Naive thymus-derived CD4-positive, alpha-beta T cell (primary cell): ENCODE measurements at regions of chr9 and their contacts with region 1.

Region 1: GRCh38 chr9:136363606-136364370 is at the start of gene DNLZ:
- DNase-seq: peak; percentile 71 to 93 (median 90)
- ATAC-seq: peak; percentile 88
- H3K4me3 ChIP-seq: peak within 1 kb of the TSS; percentile 70
- H3K4me3 Mint-ChIP-seq: peak within 1 kb of the TSS; percentile 65 to 88 (median 84)
- H3K27ac ChIP-seq: peak within 1 kb of the TSS; percentile 75
- H3K27ac Mint-ChIP-seq: peak within 1 kb of the TSS; percentile 62 to 91 (median 75)
- H3K4me1 ChIP-seq: peaks cover 0 to 5% of the 10 kb centered on the region in 2 donors
- H3K4me1 Mint-ChIP-seq: peaks cover 0 to 6% (median 0%) of the 10 kb centered on the region in 7 donors
- H3K27me3 ChIP-seq: no peaks in the 10 kb centered on the region
- H3K27me3 Mint-ChIP-seq: no peaks in the 10 kb centered on the region
- total RNA-seq, gene DNLZ: 17.2 to 27.5 (median 24.8) TPM

Region 2: GRCh38 chr9:135907431-135908092 is 456.2 kb before region 1 on chr9 and contains the start of gene CAMSAP1:
- CTCF ChIA-PET with region 1: no interaction called
- POLR2A ChIA-PET with region 1: interaction called, 3 read pairs
- intact Hi-C with region 1: loop called (anchors 1 kb)
- DNase-seq: peak; percentile 89 to 97 (median 93)
- ATAC-seq: peak; percentile 91
- H3K4me3 ChIP-seq: peak within 1 kb of the TSS; percentile 69
- H3K4me3 Mint-ChIP-seq: peak within 1 kb of the TSS; percentile 85 to 94 (median 90)
- H3K27ac ChIP-seq: peak within 1 kb of the TSS; percentile 89
- H3K27ac Mint-ChIP-seq: peak within 1 kb of the TSS; percentile 68 to 92 (median 83)
- H3K4me1 ChIP-seq: peaks cover 21% of the 10 kb centered on the region in 2 donors
- H3K4me1 Mint-ChIP-seq: peaks cover 33 to 74% (median 63%) of the 10 kb centered on the region in 7 donors
- H3K27me3 ChIP-seq: no peaks in the 10 kb centered on the region
- H3K27me3 Mint-ChIP-seq: no peaks in the 10 kb centered on the region
- total RNA-seq, gene CAMSAP1: 16.4 to 34.3 (median 23.6) TPM

Region 3: DNA sequence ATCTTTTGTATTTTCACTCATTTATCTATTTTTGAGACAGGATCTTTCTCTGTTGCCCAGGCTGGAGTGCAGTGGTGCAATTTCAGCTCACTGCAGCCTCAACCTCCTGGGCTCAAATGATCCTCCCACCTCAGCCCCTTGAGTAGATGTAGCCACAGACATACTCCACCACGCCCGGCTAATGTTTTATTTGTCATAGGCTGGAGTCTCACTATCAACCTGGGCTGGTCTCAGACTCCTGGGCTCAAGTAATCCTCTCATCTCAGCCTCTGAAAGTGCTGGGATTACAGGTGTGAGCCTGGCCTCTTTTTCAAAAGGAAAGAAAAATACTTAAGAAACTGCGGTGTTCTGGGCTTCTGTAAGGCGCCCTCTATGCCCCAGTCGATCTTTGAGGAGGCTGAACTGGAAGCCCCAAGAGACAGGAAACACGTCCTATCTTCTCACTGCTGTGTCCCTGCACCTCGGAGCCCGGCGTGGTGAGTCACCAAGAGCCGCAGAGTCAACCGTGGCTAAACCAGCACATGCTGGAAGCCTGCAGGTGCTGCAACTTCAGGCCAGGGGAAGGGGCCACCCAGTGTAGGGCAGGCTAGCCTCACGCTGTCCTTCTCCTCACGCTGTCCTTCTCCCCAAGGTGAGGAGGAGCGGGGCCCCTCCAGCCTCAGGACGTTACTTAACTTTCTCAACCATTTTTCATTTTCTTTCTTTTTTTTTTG is 143.6 kb before region 1 on chr9:
- CTCF ChIA-PET with region 1: no interaction called
- POLR2A ChIA-PET with region 1: no interaction called
- intact Hi-C with region 1: no loop called
- DNase-seq: no peak
- ATAC-seq: no peak
- H3K4me3 ChIP-seq: no peak overlapping the region
- H3K4me3 Mint-ChIP-seq: no peak overlapping the region
- H3K27ac ChIP-seq: no peak overlapping the region
- H3K27ac Mint-ChIP-seq: peak overlapping the region in 1 of 9 donors; percentile 18
- H3K4me1 ChIP-seq: no peaks in the 10 kb centered on the region
- H3K4me1 Mint-ChIP-seq: peaks cover 0 to 3% (median 2%) of the 10 kb centered on the region in 7 donors
- H3K27me3 ChIP-seq: no peaks in the 10 kb centered on the region
- H3K27me3 Mint-ChIP-seq: no peaks in the 10 kb centered on the region

Region 4: DNA sequence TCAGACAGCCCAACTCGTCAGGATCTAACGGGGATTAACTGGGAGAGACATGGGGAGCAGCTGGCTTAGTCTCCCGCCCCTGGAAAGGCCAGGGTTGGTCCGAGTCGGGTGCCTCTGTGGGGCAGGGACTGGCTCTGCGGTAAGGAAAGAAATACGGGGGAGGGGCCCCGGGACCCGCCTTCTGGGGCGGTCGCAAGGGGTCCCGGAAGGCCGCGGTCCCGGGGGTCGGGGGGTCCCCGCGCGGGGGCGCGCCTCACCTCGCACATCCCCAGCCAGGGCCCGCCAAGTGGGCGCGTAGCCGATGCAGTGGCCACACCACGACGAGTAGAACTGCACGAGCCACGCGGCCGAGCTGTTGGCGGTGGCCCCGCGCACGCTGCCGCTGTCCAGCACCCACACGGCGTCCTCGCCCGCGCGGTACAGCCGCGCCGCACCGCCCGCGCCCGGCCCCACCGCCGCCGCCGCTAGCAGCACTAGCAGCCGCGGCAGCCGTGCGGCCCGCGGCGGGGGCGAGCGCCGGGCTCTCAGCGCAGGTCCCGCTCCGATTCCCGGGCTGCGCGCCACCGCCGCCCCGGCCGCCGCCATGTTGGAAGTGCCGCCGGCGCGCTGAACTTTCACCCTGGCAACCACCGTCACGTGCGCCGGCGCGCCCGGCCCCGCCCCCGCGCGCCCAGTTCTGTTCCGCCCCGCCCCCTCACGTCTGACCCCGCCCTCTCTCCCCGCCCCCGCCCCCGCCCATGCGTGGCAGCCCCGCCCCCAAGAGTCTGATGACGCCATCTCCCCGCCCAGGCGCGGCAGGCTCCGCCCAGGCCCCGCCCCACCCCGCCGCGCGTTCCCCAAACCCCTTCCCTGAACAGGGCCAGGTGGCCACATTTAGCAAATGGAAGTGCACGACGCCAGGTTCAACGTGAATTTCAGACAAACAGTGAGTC is 118.3 kb before region 1 on chr9 and contains the start of gene QSOX2:
- CTCF ChIA-PET with region 1: no interaction called
- POLR2A ChIA-PET with region 1: no interaction called
- intact Hi-C with region 1: loop called in 1 of 2 experiments (anchors 1 kb)
- DNase-seq: peak; percentile 76 to 89 (median 82)
- ATAC-seq: peak; percentile 94
- H3K4me3 ChIP-seq: peak within 1 kb of the TSS; percentile 65
- H3K4me3 Mint-ChIP-seq: peak within 1 kb of the TSS; percentile 89 to 100 (median 94)
- H3K27ac ChIP-seq: peak within 1 kb of the TSS; percentile 65
- H3K27ac Mint-ChIP-seq: peak within 1 kb of the TSS; percentile 83 to 93 (median 88)
- H3K4me1 ChIP-seq: peaks cover 22 to 29% of the 10 kb centered on the region in 2 donors
- H3K4me1 Mint-ChIP-seq: peaks cover 25 to 45% (median 36%) of the 10 kb centered on the region in 7 donors
- H3K27me3 ChIP-seq: no peaks in the 10 kb centered on the region
- H3K27me3 Mint-ChIP-seq: peaks cover 0 to 2% (median 0%) of the 10 kb centered on the region in 5 donors
- total RNA-seq, gene QSOX2: 11.5 to 15.9 (median 12.0) TPM

Region 5: GRCh38 chr9:136327313-136327974 is 36.3 kb before region 1 on chr9 and contains the start of gene GPSM1:
- CTCF ChIA-PET with region 1: no interaction called
- POLR2A ChIA-PET with region 1: interaction called, 7 read pairs
- intact Hi-C with region 1: loop called in 1 of 2 experiments (anchors 1 kb)
- DNase-seq: peak in 8 of 9 donors; percentile 10 to 73 (median 42)
- ATAC-seq: peak; percentile 73
- H3K4me3 ChIP-seq: peak within 1 kb of the TSS; percentile 35
- H3K4me3 Mint-ChIP-seq: peak within 1 kb of the TSS; percentile 42 to 81 (median 68)
- H3K27ac ChIP-seq: peak within 1 kb of the TSS; percentile 7
- H3K27ac Mint-ChIP-seq: peak within 1 kb of the TSS in 2 of 9 donors; percentile 23 to 43
- H3K4me1 ChIP-seq: peaks cover 0 to 5% of the 10 kb centered on the region in 2 donors
- H3K4me1 Mint-ChIP-seq: peaks cover 0 to 5% (median 4%) of the 10 kb centered on the region in 7 donors
- H3K27me3 ChIP-seq: no peaks in the 10 kb centered on the region
- H3K27me3 Mint-ChIP-seq: no peaks in the 10 kb centered on the region
- total RNA-seq, gene GPSM1: 6.1 to 11.5 (median 8.6) TPM

Region 6: DNA sequence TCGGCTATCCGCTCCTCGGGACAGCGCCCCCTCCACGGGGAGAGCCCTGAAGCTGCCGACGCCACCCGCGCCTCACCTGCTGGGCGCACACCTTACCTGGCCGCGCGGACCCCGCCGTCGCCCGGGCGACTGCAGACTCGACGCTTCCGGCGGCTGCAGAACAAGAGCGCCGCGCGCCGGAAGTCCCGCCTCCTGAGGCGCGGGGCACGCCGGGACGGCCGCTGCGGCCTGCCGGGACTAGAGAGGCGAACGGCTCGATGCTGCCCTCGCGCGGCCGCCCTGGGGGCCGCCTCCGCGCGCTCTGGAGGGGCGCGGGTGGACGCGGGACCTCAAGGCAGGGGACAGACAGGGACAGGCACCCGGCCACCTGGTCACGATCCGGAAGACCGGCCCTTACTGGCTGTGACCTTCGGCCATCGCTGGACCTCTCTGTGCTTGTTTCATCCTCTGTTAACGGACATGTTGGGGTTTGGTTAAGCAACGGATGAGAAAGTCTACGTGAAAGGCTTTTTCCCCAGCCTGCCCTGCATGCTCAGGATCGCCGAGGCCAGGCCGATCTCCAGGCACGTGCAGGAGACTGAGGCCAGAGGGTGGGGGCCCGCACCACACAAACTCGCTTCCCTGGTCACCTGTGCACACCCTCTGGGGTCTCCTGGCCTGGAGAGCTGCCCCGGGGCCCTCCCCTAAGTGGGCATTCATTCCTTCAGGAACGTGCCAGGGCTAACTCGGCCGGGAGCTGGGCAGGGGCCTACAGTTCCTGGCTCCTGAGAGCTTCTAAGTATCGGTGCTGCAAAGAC is 36.4 kb after region 1 on chr9 and contains the start of gene SNAPC4:
- CTCF ChIA-PET with region 1: no interaction called
- POLR2A ChIA-PET with region 1: interaction called, 8 read pairs
- intact Hi-C with region 1: loop called (anchors 1 kb)
- DNase-seq: peak; percentile 77 to 93 (median 87)
- ATAC-seq: peak; percentile 91
- H3K4me3 ChIP-seq: peak within 1 kb of the TSS; percentile 62
- H3K4me3 Mint-ChIP-seq: peak within 1 kb of the TSS; percentile 83 to 90 (median 86)
- H3K27ac ChIP-seq: peak within 1 kb of the TSS; percentile 62
- H3K27ac Mint-ChIP-seq: peak within 1 kb of the TSS in 8 of 9 donors; percentile 26 to 78 (median 76)
- H3K4me1 ChIP-seq: peaks cover 33 to 38% of the 10 kb centered on the region in 2 donors
- H3K4me1 Mint-ChIP-seq: peaks cover 30 to 61% (median 45%) of the 10 kb centered on the region in 7 donors
- H3K27me3 ChIP-seq: no peaks in the 10 kb centered on the region
- H3K27me3 Mint-ChIP-seq: no peaks in the 10 kb centered on the region
- total RNA-seq, gene SNAPC4: 10.0 to 16.3 (median 12.8) TPM

Region 7: GRCh38 chr9:136545966-136546698 is 182.3 kb after region 1 on chr9 and contains the start of gene NOTCH1:
- CTCF ChIA-PET with region 1: no interaction called
- POLR2A ChIA-PET with region 1: no interaction called
- intact Hi-C with region 1: loop called (anchors 1 kb)
- DNase-seq: peak; percentile 77 to 91 (median 86)
- ATAC-seq: peak; percentile 89
- H3K4me3 ChIP-seq: peak within 1 kb of the TSS; percentile 81
- H3K4me3 Mint-ChIP-seq: peak within 1 kb of the TSS; percentile 78 to 95 (median 88)
- H3K27ac ChIP-seq: peak within 1 kb of the TSS; percentile 80
- H3K27ac Mint-ChIP-seq: peak within 1 kb of the TSS; percentile 57 to 90 (median 81)
- H3K4me1 ChIP-seq: peaks cover 20 to 32% of the 10 kb centered on the region in 2 donors
- H3K4me1 Mint-ChIP-seq: peaks cover under 1 to 43% (median 28%) of the 10 kb centered on the region in 7 donors
- H3K27me3 ChIP-seq: no peaks in the 10 kb centered on the region
- H3K27me3 Mint-ChIP-seq: no peaks in the 10 kb centered on the region
- total RNA-seq, gene NOTCH1: 49.7 to 92.9 (median 58.0) TPM